ENCODE measurements at regions of chr1 and their contacts with region 1.

Region 1: DNA sequence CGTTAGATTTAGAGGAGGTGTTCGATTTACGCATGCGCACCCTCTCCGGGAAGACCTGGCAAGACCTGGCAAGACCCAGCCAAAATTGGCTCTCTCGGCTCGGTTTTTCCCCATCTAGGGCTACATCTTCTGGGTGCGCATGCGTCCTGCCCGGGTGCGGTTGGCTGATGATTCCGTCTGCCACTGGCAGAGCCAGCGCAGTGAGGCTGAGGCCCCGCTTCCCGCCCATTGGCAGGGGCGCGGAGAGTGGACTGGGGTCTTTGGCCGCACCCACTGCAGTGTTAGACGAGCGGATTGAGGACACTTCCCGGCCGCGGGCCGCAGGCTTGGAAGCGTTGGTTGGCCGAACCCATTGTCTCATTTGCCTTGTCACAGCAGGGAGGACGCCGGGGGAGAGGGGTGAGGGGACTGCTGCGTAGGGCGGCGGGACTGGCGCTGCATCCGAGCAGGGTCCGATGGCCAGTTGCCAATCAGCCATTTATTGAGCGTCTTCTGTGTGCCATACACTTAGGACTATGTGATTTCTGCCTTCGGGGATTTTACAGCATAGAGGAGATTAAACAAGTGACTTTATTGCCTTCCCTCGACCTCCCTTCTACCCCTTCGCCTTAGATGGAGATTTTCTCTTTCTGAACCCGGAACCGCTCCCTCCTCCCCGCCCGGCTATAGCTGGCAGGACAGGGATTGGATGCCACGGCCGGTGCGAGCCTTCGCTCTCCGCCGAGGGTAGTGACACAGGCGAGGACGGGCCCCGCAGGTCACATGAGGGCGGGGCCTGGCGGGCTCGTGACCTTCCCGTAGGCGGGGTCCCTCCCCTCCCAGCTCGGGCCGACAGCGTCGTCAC is 43.7 kb downstream of the MEF2D start:
- DNase-seq: peak; percentile 88
- ATAC-seq: peak; percentile 84
- H3K4me3 Mint-ChIP-seq: peak overlapping the region; percentile 91
- H3K27ac Mint-ChIP-seq: peak overlapping the region; percentile 97
- H3K4me1 Mint-ChIP-seq: peaks cover 19% of the 10 kb centered on the region
- H3K27me3 Mint-ChIP-seq: no peaks in the 10 kb centered on the region
- CTCF ChIP-seq: no peak

Region 2: GRCh38 chr1:156383023-156383422 is 73.8 kb before region 1 on chr1:
- CTCF ChIA-PET with region 1: interaction called, 28 read pairs
- POLR2A ChIA-PET with region 1: interaction called, 10 read pairs
- intact Hi-C with region 1: no loop called
- DNase-seq: peak; percentile 46
- ATAC-seq: peak; percentile 97
- H3K4me3 Mint-ChIP-seq: no peak overlapping the region
- H3K27ac Mint-ChIP-seq: no peak overlapping the region
- H3K4me1 Mint-ChIP-seq: peaks cover 6% of the 10 kb centered on the region
- H3K27me3 Mint-ChIP-seq: peaks cover 17% of the 10 kb centered on the region
- CTCF ChIP-seq: no peak

Region 3: GRCh38 chr1:156480411-156481192 is 23.8 kb after region 1 on chr1:
- CTCF ChIA-PET with region 1: interaction called, 15 read pairs
- POLR2A ChIA-PET with region 1: interaction called, 26 read pairs
- intact Hi-C with region 1: loop called (anchors 1 kb)
- DNase-seq: peak; percentile 65
- ATAC-seq: peak; percentile 87
- H3K4me3 Mint-ChIP-seq: peak overlapping the region; percentile 68
- H3K27ac Mint-ChIP-seq: peak overlapping the region; percentile 87
- H3K4me1 Mint-ChIP-seq: peaks cover 56% of the 10 kb centered on the region
- H3K27me3 Mint-ChIP-seq: no peaks in the 10 kb centered on the region
- CTCF ChIP-seq: peak; percentile 55

Region 4: DNA sequence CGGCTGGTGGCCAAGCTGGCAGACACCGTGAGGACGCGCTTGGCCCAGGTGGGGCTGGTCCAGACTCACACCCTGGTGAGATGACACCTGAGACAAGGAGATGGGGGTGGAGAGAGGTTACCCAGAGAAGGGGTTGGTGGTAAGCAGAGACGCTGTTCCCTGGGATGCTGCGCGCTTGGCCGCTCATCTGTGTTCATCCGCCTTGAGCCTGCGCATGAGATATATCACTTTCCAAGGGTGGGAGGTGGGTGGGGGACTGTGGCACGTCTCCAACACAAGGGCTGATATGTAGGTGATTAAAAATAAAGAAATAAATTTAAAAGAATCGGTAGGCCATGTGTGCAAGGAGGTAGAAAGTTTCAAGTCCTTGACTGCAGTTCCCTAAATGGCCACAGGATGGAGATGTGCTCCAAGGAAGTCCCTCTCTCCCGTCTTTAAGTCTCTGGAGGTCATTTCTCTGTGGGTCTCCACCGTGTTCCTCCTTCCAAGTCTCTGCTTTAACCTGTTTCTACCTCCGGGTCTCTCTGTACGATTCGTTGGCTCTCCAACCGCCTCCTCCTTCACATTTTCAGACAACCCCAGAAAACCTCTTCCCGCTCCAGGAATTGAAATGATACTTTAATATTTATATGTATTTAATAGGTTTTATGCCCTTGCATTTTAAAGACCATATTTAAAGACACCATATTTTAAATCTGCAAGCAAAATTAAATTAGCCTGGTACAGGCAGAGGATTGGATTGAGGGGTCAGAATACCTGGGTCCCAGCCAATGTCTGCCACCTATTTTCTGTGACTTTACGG is 127.2 kb after region 1 on chr1:
- CTCF ChIA-PET with region 1: no interaction called
- POLR2A ChIA-PET with region 1: interaction called, 20 read pairs
- intact Hi-C with region 1: loop called (anchors 1 kb)
- DNase-seq: no peak
- ATAC-seq: peak; percentile 54
- H3K4me3 Mint-ChIP-seq: peak overlapping the region; percentile 53
- H3K27ac Mint-ChIP-seq: peak overlapping the region; percentile 99
- H3K4me1 Mint-ChIP-seq: peaks cover 33% of the 10 kb centered on the region
- H3K27me3 Mint-ChIP-seq: no peaks in the 10 kb centered on the region
- CTCF ChIP-seq: no peak

Region 5: GRCh38 chr1:156601122-156601830 is 144.4 kb after region 1 on chr1 and contains the start of gene GPATCH4:
- CTCF ChIA-PET with region 1: interaction called, 4 read pairs
- POLR2A ChIA-PET with region 1: interaction called, 17 read pairs
- intact Hi-C with region 1: loop called (anchors 2 kb)
- DNase-seq: peak; percentile 66
- ATAC-seq: peak; percentile 74
- H3K4me3 Mint-ChIP-seq: peak within 1 kb of the TSS; percentile 99
- H3K27ac Mint-ChIP-seq: peak within 1 kb of the TSS; percentile 99
- H3K4me1 Mint-ChIP-seq: peaks cover 41% of the 10 kb centered on the region
- H3K27me3 Mint-ChIP-seq: no peaks in the 10 kb centered on the region
- CTCF ChIP-seq: no peak
- total RNA-seq, gene GPATCH4: 64.6 and 71.8 TPM in 2 replicates

Region 6: GRCh38 chr1:156641761-156642264 is 185.0 kb after region 1 on chr1 and contains the start of gene BCAN:
- CTCF ChIA-PET with region 1: no interaction called
- POLR2A ChIA-PET with region 1: no interaction called
- intact Hi-C with region 1: no loop called
- DNase-seq: no peak
- ATAC-seq: peak; percentile 51
- H3K4me3 Mint-ChIP-seq: peak within 1 kb of the TSS; percentile 68
- H3K27ac Mint-ChIP-seq: no peak within 1 kb of the TSS
- H3K4me1 Mint-ChIP-seq: peaks cover 20% of the 10 kb centered on the region
- H3K27me3 Mint-ChIP-seq: peaks cover 78% of the 10 kb centered on the region
- CTCF ChIP-seq: no peak
- total RNA-seq, gene BCAN: 0.27 and 0.51 TPM in 2 replicates

Region 7: DNA sequence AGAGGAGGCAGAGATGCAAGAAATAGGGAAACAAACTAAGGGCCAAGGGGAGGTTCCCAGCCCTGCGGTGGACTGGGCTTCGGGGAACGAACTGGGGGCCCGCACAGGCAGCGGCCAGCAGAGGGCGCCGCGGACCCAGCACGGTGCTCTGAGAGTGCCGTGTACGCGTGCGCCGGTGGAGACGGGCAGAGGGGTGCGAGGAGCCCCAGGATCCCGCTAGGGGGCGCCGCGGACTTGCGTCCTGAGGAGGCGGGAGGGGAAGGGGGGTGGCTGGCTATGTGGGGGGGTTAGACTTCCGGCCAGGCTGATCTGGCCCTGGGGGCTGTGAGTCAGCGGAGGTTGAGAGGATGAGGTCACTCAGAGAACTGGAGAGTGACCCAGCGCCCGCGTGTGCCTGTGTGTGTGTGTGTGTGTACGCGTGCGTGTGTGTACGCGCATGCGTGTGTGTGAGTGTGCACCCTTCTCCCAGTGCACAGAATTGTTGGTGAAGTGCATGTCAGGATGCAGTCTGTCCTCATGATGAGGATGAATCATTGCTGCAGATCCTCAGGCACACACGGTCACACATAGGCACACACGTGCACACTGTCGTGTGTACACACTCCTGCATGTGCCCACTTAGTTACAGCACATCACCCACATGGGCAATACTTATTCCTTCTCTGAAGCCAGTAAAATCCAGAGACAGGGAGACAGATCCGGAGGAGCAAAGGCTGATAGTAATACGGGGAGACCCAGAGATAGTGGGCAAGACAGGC is 203.3 kb after region 1 on chr1:
- CTCF ChIA-PET with region 1: no interaction called
- POLR2A ChIA-PET with region 1: interaction called, 3 read pairs
- intact Hi-C with region 1: loop called (anchors 2 kb)
- DNase-seq: peak; percentile 87
- ATAC-seq: peak; percentile 85
- H3K4me3 Mint-ChIP-seq: peak overlapping the region; percentile 62
- H3K27ac Mint-ChIP-seq: peak overlapping the region; percentile 63
- H3K4me1 Mint-ChIP-seq: peaks cover 90% of the 10 kb centered on the region
- H3K27me3 Mint-ChIP-seq: peaks cover 22% of the 10 kb centered on the region
- CTCF ChIP-seq: peak; percentile 66